ENCODE measurements at regions of chr10 and their contacts with region 1.

Region 1: DNA sequence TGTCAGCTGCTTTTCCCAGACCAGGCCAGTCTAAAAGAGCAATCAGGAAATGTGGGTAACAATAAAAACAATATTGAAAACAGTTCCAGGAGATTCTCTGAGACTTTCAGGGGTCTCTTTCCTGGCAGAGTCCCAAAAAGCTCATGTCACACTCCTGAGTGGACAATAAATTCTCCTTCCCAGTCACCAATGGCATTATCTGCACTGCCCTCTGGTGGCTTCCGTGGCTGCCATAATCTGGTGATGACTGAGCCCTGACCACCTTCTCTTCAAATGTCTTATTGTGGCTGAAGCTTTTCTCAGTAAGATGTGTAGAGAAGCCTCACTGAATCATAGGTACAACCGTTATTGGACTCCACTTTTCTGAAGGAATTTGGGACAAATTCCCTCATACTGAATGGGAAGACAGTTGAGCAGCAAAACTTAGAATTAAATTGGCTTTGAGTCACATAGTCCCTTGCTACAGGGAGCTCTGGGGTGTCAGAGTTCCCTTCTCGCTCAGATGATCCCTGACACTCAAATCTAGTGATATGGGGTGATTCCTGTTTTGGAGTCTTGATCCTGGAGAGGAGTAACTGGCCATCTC is 24.4 kb upstream of the ASAH2 start:
- DNase-seq: peak; percentile 45
- ATAC-seq: peak; percentile 53; the same call in 1 of the 2 replicates
- H3K4me3 Mint-ChIP-seq: no peak overlapping the region
- H3K27ac Mint-ChIP-seq: no peak overlapping the region
- H3K4me1 Mint-ChIP-seq: peaks cover 10% of the 10 kb centered on the region
- H3K27me3 Mint-ChIP-seq: peaks cover 5% of the 10 kb centered on the region; the same call in 1 of the 2 replicates
- CTCF ChIP-seq: no peak

Region 2: DNA sequence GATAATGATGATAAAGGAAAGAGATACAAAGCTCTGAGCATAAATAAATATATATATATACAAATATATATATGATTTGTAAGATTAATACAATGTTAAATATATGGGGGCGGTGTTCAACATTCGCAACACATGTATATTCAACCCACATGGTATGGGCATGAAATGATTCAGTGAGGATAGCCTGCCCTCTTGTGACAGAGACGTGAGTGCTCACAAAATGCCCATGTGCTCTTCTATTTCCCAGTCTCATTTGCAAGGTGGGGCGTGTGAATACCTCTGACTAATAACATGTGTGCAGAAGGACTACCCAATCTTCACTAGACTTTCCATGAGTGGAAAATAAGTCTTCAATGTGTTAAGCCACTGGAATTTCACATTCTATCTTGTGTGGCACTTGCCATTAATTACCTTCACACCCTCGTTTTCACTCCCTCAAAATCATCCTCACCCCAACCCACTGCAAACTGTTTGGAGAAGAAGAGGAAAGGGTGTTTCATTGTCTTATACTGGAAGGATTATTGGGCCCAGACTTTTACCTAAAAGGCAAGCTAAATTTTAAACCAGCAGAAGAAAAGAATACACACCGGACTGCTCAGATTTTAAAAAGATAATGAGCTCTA is 51.3 kb before region 1 on chr10:
- CTCF ChIA-PET with region 1: interaction called, 11 read pairs
- POLR2A ChIA-PET with region 1: no interaction called
- DNase-seq: peak; percentile 28
- ATAC-seq: peak; percentile 98
- H3K4me3 Mint-ChIP-seq: no peak overlapping the region
- H3K27ac Mint-ChIP-seq: no peak overlapping the region
- H3K4me1 Mint-ChIP-seq: no peaks in the 10 kb centered on the region
- H3K27me3 Mint-ChIP-seq: no peaks in the 10 kb centered on the region
- CTCF ChIP-seq: peak; percentile 36; the same call in 1 of the 2 replicates

Region 3: GRCh38 chr10:50260791-50261281 is 14.9 kb before region 1 on chr10:
- CTCF ChIA-PET with region 1: interaction called, 10 read pairs
- POLR2A ChIA-PET with region 1: no interaction called
- DNase-seq: no peak
- ATAC-seq: no peak
- H3K4me3 Mint-ChIP-seq: no peak overlapping the region
- H3K27ac Mint-ChIP-seq: no peak overlapping the region
- H3K4me1 Mint-ChIP-seq: peaks cover 25% of the 10 kb centered on the region
- H3K27me3 Mint-ChIP-seq: no peaks in the 10 kb centered on the region; the same call in none of the 2 replicates
- CTCF ChIP-seq: no peak

Region 4: GRCh38 chr10:50929670-50930069 is 653.9 kb after region 1 on chr10:
- CTCF ChIA-PET with region 1: no interaction called
- POLR2A ChIA-PET with region 1: no interaction called
- DNase-seq: no peak
- ATAC-seq: peak; percentile 46
- H3K4me3 Mint-ChIP-seq: no peak overlapping the region
- H3K27ac Mint-ChIP-seq: no peak overlapping the region
- H3K4me1 Mint-ChIP-seq: no peaks in the 10 kb centered on the region
- H3K27me3 Mint-ChIP-seq: no peaks in the 10 kb centered on the region; the same call in 1 of the 2 replicates
- CTCF ChIP-seq: no peak

Measured in WTC11 (cell line).